Common myeloid progenitor, CD34-positive (primary cell): ENCODE measurements at regions of chr2 and their contacts with region 1.

Region 1: GRCh38 chr2:19955544-19956422 is 34.1 kb downstream of the WDR35 start:
- DNase-seq: peak; percentile 80 to 87 (median 83)
- H3K4me3 ChIP-seq: no peak overlapping the region
- H3K27ac ChIP-seq: no peak overlapping the region
- H3K4me1 ChIP-seq: no peaks in the 10 kb centered on the region
- H3K27me3 ChIP-seq: no peaks in the 10 kb centered on the region

Region 2: DNA sequence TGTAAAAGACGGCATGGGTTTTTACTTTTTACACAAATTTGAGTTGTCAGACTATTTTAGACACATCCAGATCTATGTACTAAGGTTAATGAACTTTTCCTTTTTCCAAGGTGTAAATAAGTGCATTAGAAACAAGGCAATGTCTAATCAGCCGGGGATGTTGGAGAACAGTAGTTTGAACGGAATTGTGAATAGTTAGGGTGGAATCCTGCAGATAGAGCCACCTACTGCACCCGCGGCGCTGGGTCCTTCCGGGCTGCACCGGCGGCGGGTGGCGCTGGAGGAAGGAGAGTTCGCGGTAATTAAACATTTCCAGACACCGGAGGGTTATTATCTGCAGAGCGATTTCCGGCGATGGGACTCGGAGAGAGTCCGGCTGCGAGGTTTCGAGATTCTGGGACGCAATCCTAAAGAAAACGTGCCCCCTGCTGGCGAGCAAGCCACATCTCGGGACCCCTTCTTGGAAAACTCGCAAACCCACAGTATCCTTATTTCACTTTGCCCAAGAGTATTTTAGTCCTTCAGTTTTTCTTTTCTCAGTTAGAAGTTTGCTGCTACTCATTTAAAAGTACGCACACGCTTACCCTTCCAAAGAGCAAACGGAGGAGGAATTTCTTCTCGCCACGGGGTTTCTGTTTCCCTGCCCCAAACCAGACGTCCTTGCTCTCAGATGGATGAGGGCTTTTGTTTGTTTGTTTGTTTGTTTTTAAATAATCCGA is 592.9 kb before region 1 on chr2:
- CTCF ChIA-PET with region 1: no interaction called
- POLR2A ChIA-PET with region 1: no interaction called
- DNase-seq: no peak
- H3K4me3 ChIP-seq: peak overlapping the region in 6 of 7 experiments; percentile 47 to 98 (median 74)
- H3K27ac ChIP-seq: no peak overlapping the region
- H3K4me1 ChIP-seq: peaks cover 8 to 34% (median 24%) of the 10 kb centered on the region in 4 experiments
- H3K27me3 ChIP-seq: peaks cover 28 to 96% (median 55%) of the 10 kb centered on the region in 5 experiments

Region 3: DNA sequence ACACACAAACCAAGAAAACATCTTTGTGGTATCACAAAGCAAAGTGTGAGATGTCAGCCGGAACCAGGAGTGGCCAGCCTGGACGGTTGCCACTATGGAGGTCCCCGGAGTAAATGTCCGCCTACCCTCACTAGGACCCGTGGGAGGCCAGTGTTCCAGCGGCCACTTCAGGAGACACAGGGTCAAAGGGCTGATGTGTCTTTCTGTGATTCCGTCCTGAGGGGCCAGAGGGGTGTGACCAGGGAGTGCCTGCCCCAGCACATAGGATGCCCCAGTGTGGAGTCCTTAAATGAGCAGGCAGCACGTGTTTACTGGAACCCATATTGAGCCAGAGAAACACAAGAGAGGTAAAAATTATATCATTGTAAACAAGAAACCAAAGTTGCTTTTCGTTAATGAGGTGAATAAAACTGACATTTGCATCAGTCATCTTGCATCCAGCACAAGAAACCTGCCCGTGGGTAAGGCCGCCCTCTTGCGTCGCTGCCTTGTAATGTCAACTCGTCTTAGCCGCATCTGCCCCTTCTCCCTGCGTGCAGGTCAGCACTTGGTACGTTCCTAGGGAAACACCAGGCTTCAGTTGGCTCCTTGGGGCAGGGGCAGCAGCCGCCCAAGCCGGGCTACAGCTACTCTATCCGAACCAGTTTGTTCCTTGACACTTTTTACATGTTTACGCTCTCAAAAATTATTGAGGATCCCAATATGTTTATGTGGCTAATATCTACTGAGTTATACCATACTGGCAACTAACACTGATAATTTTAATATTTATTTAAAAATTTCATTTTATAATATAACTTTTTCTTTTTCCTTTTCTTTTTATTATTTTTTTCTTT is 142.3 kb after region 1 on chr2:
- CTCF ChIA-PET with region 1: interaction called, 16 read pairs
- POLR2A ChIA-PET with region 1: no interaction called
- DNase-seq: peak; percentile 87 to 94 (median 93)
- H3K4me3 ChIP-seq: no peak overlapping the region
- H3K27ac ChIP-seq: no peak overlapping the region
- H3K4me1 ChIP-seq: no peaks in the 10 kb centered on the region
- H3K27me3 ChIP-seq: no peaks in the 10 kb centered on the region